ENCODE measurements at regions of chrX and their contacts with region 1.

Region 1: GRCh38 chrX:1323315-1323714 is 13.3 kb upstream of the IL3RA start:
- DNase-seq: peak; percentile 33 to 49
- ATAC-seq: peak in 7 of 8 donors; percentile 44 to 78 (median 67)
- H3K4me3 ChIP-seq: no peak overlapping the region
- H3K27ac ChIP-seq: no peak overlapping the region
- H3K4me1 ChIP-seq: peaks cover 0 to 16% (median 0%) of the 10 kb centered on the region in 9 donors
- H3K27me3 ChIP-seq: peaks cover 0 to 10% (median 4%) of the 10 kb centered on the region in 7 donors
- CTCF ChIP-seq: peak in 8 of 9 donors; percentile 29 to 66 (median 59)

Region 2: GRCh38 chrX:1336331-1336943 is 13.1 kb after region 1 on chrX and contains the start of gene IL3RA:
- intact Hi-C with region 1: loop called in 1 of 10 experiments (anchors 1 kb)
- DNase-seq: peak in 1 of 2 donors; percentile 58
- ATAC-seq: peak; percentile 74 to 93 (median 82)
- H3K4me3 ChIP-seq: peak within 1 kb of the TSS in 9 of 10 donors; percentile 38 to 64 (median 56)
- H3K27ac ChIP-seq: peak within 1 kb of the TSS in 9 of 10 donors; percentile 2 to 89 (median 80)
- H3K4me1 ChIP-seq: peaks cover 0 to 48% (median 4%) of the 10 kb centered on the region in 9 donors
- H3K27me3 ChIP-seq: no peaks in the 10 kb centered on the region
- CTCF ChIP-seq: no peak
- total RNA-seq, gene IL3RA: 4.5 to 11.4 (median 5.0) TPM

Region 3: GRCh38 chrX:2484721-2485648 is 1161.7 kb after region 1 on chrX:
- intact Hi-C with region 1: loop called in 1 of 10 experiments (anchors 5 kb)
- DNase-seq: peak; percentile 26 to 29
- ATAC-seq: peak in 7 of 8 donors; percentile 48 to 72 (median 65)
- H3K4me3 ChIP-seq: peak overlapping the region in 8 of 10 donors; percentile 4 to 40 (median 28)
- H3K27ac ChIP-seq: peak overlapping the region; percentile 63 to 80 (median 72)
- H3K4me1 ChIP-seq: peaks cover 0 to 38% (median 13%) of the 10 kb centered on the region in 9 donors
- H3K27me3 ChIP-seq: no peaks in the 10 kb centered on the region
- CTCF ChIP-seq: no peak

Measured in heart right ventricle (tissue), 16 donors.